RWPE1 (cell line): ENCODE measurements at regions of chr1 and their contacts with region 1.

Region 1: DNA sequence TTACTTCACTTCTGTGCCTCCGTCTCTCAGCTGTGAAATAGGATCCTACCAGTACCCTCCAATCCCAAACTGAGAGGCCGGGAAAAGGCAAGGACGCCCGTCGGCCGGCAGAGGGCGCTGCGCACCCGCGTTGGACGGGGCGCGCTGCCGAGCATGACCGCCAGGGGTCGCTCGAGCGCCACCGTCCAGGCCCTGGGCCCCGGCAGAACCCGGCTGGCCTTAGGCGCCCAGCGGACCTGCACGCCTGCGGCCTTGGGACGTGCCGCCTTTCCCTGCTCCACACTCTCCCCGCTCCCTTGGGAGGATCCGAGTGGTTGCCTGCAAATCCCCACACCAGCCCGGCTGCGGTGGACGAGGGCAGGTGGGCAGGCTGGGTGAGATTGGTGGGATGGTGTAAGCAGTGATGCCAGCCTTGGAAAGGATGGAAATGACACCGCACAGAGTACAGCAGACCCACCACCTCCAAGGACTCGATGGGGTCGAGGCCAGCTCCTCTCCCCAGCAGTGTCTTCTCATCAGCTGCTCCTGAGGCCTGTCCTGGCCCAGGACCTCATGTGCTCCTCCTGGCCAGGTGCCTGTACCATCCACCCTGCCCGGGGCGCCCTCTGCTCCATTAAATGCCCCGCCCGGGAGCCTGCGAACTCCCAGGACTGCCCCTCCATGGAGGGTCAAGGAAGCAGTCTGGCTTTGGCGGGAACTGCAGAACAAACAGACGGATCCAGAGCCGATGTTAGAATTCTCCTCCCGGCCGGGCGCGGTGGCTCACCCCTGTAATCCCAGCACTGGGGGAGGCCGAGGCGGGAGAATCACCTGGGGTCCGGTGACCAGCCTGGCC is 47.4 kb upstream of the LBR start:
- DNase-seq: peak; percentile 85
- H3K27ac ChIP-seq: no peak overlapping the region
- CTCF ChIP-seq: peak; percentile 100

Region 2: GRCh38 chr1:223771814-223772770 is 1703.1 kb before region 1 on chr1:
- CTCF ChIA-PET with region 1: no interaction called
- POLR2A ChIA-PET with region 1: no interaction called
- DNase-seq: peak; percentile 76
- H3K27ac ChIP-seq: peak overlapping the region; percentile 74
- CTCF ChIP-seq: no peak

Region 3: GRCh38 chr1:225447650-225448089 is 27.5 kb before region 1 on chr1:
- CTCF ChIA-PET with region 1: interaction called, 12 read pairs
- POLR2A ChIA-PET with region 1: no interaction called
- DNase-seq: no peak
- H3K27ac ChIP-seq: no peak overlapping the region; the same call in 1 of the 2 replicates
- CTCF ChIP-seq: no peak

Region 4: DNA sequence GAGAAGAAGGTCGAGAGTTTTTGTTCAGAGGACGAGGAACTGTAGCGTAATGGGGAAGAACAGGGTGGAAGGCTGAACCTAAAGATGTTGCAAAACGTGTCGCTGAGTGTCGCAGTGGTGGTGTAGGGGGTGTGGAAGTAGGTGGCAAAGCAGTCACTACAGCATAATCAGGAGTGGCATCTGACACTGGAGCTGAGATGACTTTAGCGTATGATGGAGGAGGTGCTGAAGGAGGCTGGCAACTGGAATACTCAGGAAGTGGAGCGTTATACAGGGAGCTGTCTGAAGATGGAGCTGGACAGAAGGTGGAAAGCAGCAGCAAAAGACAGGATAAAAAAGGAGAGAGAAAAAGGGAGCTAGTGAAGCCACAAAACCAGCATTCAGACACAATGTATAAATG is 42.5 kb after region 1 on chr1:
- CTCF ChIA-PET with region 1: no interaction called
- POLR2A ChIA-PET with region 1: no interaction called
- DNase-seq: no peak
- H3K27ac ChIP-seq: no peak overlapping the region
- CTCF ChIP-seq: no peak

Region 5: GRCh38 chr1:225652729-225653462 is 177.7 kb after region 1 on chr1 and contains the start of gene ENAH:
- CTCF ChIA-PET with region 1: interaction called, 12 read pairs
- POLR2A ChIA-PET with region 1: no interaction called
- DNase-seq: peak; percentile 88
- H3K27ac ChIP-seq: peak within 1 kb of the TSS; percentile 94
- CTCF ChIP-seq: no peak

Region 6: DNA sequence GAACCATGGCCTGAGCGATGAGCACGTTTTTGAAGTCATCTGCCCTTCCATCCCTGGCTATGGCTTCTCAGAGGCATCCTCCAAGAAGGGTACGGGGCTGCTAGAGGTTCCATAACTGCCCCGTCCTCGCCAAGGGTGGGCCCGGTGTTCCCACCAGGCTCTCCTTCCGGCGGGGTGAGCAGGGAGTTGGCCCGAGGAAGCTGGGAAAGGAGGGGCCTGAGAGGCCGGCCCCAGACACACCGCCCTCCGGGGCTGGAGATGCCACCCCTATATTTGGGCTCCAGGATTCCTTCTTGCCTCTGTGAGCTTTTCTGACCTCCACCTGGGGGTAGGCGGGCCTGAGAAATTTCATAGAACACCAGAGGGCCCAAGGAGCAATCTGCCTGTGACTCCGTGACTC is 363.6 kb after region 1 on chr1:
- CTCF ChIA-PET with region 1: interaction called, 12 read pairs
- POLR2A ChIA-PET with region 1: no interaction called
- DNase-seq: no peak
- H3K27ac ChIP-seq: peak overlapping the region; percentile 22
- CTCF ChIP-seq: no peak

Region 7: GRCh38 chr1:225977937-225978748 is 502.9 kb after region 1 on chr1:
- CTCF ChIA-PET with region 1: interaction called, 23 read pairs
- POLR2A ChIA-PET with region 1: no interaction called
- DNase-seq: no peak
- H3K27ac ChIP-seq: peak overlapping the region; percentile 50
- CTCF ChIP-seq: no peak